Endothelial cell of umbilical vein (primary cell): ENCODE measurements at regions of chr7 and their contacts with region 1.

Region 1: DNA sequence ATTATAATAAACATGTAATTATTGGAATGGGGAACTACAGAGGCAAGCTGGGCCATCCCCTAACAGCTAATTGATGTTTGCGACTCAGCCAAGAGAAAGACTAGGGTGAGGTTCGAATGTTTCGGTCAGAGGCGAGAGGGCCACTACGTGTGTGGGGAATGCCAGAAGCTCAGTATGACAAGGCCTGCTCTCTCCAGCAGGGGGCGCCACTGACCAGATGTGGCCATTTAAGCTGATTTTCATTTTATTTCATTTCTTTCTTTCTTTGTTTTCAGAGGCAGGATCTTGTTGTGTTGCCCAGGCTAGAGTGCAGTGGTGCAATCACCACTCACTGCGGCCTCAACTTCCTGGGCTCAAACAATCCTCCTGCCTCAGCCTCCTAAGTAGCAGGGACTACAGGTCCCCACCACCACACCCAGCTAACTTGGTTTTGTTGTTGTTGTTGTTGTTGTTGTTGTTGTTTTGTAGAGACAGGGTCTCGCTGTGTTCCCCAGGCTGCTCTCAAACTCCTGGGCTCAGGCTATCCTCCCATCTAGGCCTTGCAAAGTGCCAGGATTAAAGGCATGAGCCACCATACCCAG is 38.1 kb downstream of the TMEM130 start:
- DNase-seq: peak; percentile 18
- H3K4me3 ChIP-seq: no peak overlapping the region
- H3K27ac ChIP-seq: no peak overlapping the region
- H3K4me1 ChIP-seq: no peaks in the 10 kb centered on the region
- H3K27me3 ChIP-seq: no peaks in the 10 kb centered on the region
- CTCF ChIP-seq: peak; percentile 63 to 70
- POLR2A ChIP-seq: no peak

Region 2: GRCh38 chr7:98872328-98872924 is 40.7 kb after region 1 on chr7:
- CTCF ChIA-PET with region 1: interaction called, 14 read pairs
- POLR2A ChIA-PET with region 1: no interaction called
- dilution Hi-C with region 1: no loop called
- intact Hi-C with region 1: loop called (anchors 1 kb)
- DNase-seq: no peak
- H3K4me3 ChIP-seq: no peak overlapping the region
- H3K27ac ChIP-seq: no peak overlapping the region
- H3K4me1 ChIP-seq: no peaks in the 10 kb centered on the region
- H3K27me3 ChIP-seq: peaks cover 20 to 24% of the 10 kb centered on the region in 2 experiments
- CTCF ChIP-seq: peak in 1 of 2 donors; percentile 10
- POLR2A ChIP-seq: no peak